ENCODE measurements at regions of chr12 and their contacts with region 1.

Region 1: GRCh38 chr12:71754461-71755145 is at the start of gene RAB21:
- DNase-seq: peak; percentile 100
- total RNA-seq, gene RAB21: 90.8 to 103 TPM

Region 2: GRCh38 chr12:71685914-71686665 is 68.5 kb before region 1 on chr12 and contains the start of gene TMEM19:
- intact Hi-C with region 1: loop called in 1 of 2 experiments (anchors 2 kb)
- DNase-seq: peak; percentile 97
- total RNA-seq, gene TMEM19: 12.9 to 14.1 TPM

Region 3: GRCh38 chr12:71710276-71711125 is 44.1 kb before region 1 on chr12:
- intact Hi-C with region 1: no loop called
- DNase-seq: no peak

Measured in posterior vena cava (tissue), 2 donors.